ENCODE measurements at regions of chr17 and their contacts with region 1.

Region 1: DNA sequence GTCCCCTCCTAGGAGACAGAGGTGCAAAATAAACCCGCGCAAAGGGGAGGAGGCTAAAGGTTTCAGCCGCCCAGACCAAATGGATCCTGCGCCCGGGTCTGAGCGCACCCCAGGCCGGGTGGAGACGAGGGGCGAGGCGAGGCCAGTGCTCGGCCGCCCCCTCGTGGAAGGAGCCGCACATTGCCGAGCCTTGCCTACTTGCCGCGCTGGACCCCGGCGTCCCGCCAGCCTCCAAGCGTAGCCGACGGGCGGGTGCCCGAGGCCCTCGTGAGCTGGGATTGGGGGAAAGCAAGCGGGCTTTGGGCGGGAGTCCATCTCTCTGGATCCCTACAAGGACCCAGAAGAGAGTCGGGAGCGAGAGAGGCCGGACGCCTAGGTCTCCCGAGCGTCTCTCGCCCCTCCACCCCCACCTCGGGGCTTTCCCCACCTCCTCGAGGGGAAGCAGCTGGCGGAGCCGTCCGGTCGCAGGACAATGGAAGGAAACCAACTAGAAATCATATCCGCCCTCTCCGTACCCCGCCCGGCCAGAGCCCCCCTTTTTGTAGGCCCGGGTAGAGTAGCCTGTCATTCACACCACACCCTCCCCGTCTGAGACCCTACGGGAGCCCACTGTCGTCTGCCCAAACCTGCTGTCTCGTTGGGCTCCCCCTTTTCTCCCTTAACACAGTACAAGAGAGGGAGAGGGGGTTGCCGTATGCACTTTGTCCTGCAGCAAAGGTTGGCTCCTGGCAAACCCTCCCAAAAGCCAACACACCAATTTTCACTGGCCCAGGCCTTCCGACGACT is 664 bp upstream of the BCL6B start:
- DNase-seq: no peak
- H3K4me3 ChIP-seq: peak overlapping the region; percentile 44
- CTCF ChIP-seq: peak; percentile 98

Region 2: GRCh38 chr17:6666077-6666521 is 356.1 kb before region 1 on chr17:
- CTCF ChIA-PET with region 1: interaction called, 14 read pairs
- POLR2A ChIA-PET with region 1: no interaction called
- DNase-seq: no peak
- H3K4me3 ChIP-seq: no peak overlapping the region
- CTCF ChIP-seq: peak; percentile 92

Region 3: GRCh38 chr17:6753006-6753445 is 269.2 kb before region 1 on chr17:
- CTCF ChIA-PET with region 1: interaction called, 12 read pairs
- POLR2A ChIA-PET with region 1: no interaction called
- DNase-seq: peak; percentile 71
- H3K4me3 ChIP-seq: peak overlapping the region; percentile 9; the same call in 1 of the 2 replicates
- CTCF ChIP-seq: no peak

Region 4: GRCh38 chr17:6927290-6928126 is 94.7 kb before region 1 on chr17:
- CTCF ChIA-PET with region 1: interaction called, 14 read pairs
- POLR2A ChIA-PET with region 1: no interaction called
- DNase-seq: peak; percentile 5
- H3K4me3 ChIP-seq: no peak overlapping the region
- CTCF ChIP-seq: no peak

Region 5: DNA sequence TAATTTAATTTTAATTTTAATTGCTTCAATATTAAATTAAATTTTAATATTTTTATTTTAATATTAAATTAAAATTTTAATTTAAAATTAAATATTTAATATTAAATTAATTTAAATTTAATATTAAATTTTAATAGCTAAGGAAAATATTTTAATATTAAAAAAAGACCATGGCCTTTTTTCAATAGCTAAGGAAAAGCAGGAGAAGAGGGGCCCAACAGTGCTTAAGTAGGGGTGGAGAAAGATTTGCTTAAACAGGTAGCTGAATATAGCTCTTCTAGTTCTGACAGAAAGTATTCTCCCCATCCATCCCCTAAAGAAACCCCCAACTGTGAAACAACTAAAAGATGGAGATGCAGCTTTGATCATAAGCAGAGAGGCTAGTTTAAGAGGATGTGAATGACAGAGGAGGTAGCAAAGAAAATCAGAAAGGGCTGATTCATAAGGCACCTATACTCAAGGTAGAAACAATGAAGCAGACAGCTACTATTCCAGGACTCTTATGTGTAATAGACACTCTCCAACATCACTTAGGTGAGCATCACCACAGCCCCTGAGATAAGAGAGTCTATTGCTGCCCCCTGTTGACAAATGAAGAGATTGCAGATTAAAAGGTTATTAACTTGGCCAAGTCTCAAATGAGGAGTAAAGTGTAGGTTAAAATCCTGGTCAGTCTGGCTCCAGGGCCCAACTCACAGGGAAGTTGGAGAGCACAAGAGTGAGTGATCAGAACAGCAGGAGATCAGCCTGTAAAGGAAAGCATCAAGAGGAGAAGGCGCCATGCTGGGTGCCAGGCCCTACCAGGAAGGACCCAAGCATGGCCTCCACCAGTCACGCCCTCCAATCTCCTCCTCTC is 17.6 kb before region 1 on chr17:
- CTCF ChIA-PET with region 1: interaction called, 45 read pairs
- POLR2A ChIA-PET with region 1: no interaction called
- DNase-seq: no peak
- H3K4me3 ChIP-seq: no peak overlapping the region
- CTCF ChIP-seq: peak; percentile 48

Region 6: GRCh38 chr17:7035591-7036368 is 13.6 kb after region 1 on chr17 and contains the start of gene SLC16A13:
- CTCF ChIA-PET with region 1: interaction called, 17 read pairs
- POLR2A ChIA-PET with region 1: interaction called, 4 read pairs
- DNase-seq: peak; percentile 66
- H3K4me3 ChIP-seq: peak within 1 kb of the TSS; percentile 80
- CTCF ChIP-seq: no peak

Region 7: DNA sequence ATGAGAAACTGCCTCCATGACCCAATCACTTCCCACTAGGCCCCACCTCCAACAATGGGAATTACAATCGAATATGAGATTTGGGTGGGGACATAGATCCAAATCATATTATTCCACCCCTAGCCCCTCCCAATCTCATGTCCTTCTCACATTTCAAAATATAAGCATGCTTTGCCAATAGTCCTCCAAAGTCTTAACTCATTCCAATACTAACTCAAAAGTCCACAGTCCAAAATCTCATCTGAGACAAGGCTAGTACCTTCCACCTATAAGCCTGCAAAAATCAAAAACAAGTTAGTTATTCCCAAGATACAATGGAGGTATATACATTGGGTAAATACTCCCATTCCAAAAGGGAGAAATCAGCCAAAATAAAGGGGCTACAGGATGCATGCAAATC is 45.0 kb after region 1 on chr17:
- CTCF ChIA-PET with region 1: no interaction called
- POLR2A ChIA-PET with region 1: no interaction called
- DNase-seq: no peak
- H3K4me3 ChIP-seq: no peak overlapping the region
- CTCF ChIP-seq: no peak